ENCODE measurements at regions of chr1 and their contacts with region 1.

Region 1: GRCh38 chr1:204941421-204942338 is 71.0 kb downstream of the NFASC start:
- DNase-seq: no peak
- H3K4me3 ChIP-seq: no peak overlapping the region
- H3K27ac ChIP-seq: peak overlapping the region; percentile 28 to 64 (median 57)
- H3K4me1 ChIP-seq: peaks cover 4 to 31% (median 5%) of the 10 kb centered on the region in 4 donors
- H3K27me3 ChIP-seq: no peaks in the 10 kb centered on the region
- CTCF ChIP-seq: peak; percentile 92 to 95 (median 93)
- EP300 ChIP-seq: no peak
- POLR2A ChIP-seq: no peak

Region 2: DNA sequence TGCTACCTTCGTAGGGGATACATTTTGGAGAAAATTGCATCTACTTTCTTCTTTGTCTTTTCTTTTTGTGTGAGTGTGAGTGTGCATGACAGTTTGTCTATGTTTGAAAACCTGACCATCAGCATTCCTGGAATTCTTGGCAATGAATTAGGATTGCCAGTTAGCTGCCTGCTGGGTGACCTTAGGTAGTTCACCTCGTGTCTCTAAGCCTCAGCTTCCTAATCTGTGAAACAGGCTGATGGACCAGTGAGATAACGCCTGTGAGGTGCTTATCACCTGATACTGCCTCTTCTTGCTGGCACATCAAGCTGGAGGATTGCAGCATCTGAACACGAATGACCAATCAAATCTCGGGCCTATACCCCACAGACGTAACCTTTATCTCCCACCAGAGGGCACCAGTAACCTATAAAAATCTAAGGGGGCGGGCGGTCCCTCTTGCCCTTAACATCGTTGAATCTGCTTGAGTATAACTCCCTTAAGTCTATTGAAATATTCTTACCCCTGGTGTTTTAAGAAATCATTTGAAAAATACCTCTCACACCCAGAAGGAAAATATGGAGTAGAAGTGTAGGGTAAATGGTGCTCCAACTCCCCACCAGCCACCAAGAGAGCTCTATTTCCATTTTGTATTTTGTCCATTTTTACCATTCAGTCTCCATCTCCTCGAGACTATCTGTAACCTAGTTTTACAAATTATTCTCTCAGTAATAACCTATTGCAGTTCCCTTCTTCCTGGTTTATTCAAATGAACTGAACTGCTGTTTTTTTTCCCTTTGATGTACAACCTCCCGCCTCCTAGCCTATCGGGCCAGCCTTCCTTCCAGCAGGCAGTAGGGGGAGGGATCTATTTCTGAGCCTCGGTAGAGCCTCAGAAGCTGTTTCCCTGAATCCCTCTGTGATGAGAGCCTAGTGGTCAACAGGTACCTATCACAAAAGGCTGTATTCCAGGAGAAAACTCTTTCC is 375.8 kb before region 1 on chr1:
- intact Hi-C with region 1: loop called (anchors 5 kb)
- DNase-seq: no peak
- H3K4me3 ChIP-seq: no peak overlapping the region
- H3K27ac ChIP-seq: no peak overlapping the region
- H3K4me1 ChIP-seq: peaks cover 0 to 12% (median 8%) of the 10 kb centered on the region in 4 donors
- H3K27me3 ChIP-seq: no peaks in the 10 kb centered on the region
- CTCF ChIP-seq: peak; percentile 70 to 83 (median 71)
- EP300 ChIP-seq: no peak
- POLR2A ChIP-seq: no peak

Region 3: DNA sequence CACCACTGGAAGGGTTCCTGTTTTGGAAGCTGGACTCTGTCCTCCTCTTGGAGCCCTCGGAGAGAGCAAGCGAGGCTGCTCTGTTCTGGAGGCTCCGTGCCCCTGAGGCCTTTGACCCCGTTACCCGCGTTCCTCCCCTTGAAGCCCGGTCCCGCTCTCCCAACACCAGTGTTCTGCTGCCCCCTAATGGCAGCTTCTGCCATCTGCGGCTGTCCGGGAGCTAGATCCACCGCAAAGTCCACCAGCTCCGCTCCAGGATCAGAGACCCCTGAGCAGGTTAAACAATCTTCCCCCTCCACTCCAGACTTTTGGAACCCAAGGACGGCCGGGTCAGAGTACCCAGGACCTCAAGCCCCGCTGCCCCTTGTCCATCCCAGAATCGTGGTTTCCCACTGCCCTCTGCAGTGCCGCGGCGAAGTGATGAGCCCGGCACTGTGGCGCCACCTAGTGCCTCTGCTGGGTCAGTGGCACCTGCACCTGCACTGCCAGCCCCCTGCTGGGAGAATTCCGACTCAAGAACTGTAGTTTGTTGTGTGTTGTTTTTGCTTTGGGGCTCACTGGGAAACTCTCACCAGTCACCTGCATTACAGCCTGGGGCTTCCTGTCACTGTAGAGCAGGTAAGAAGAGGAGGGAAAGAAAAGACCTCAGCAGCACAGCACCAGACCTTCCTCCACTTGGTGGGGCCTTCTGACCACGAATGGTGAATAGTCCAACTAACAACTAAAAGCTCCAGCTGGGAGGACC is 134.6 kb before region 1 on chr1:
- intact Hi-C with region 1: loop called (anchors 1 kb)
- DNase-seq: peak; percentile 95
- H3K4me3 ChIP-seq: peak overlapping the region; percentile 50 to 66 (median 52)
- H3K27ac ChIP-seq: no peak overlapping the region
- H3K4me1 ChIP-seq: peaks cover 6 to 21% (median 14%) of the 10 kb centered on the region in 4 donors
- H3K27me3 ChIP-seq: no peaks in the 10 kb centered on the region
- CTCF ChIP-seq: peak; percentile 87 to 98 (median 96)
- EP300 ChIP-seq: no peak
- POLR2A ChIP-seq: no peak

Region 4: DNA sequence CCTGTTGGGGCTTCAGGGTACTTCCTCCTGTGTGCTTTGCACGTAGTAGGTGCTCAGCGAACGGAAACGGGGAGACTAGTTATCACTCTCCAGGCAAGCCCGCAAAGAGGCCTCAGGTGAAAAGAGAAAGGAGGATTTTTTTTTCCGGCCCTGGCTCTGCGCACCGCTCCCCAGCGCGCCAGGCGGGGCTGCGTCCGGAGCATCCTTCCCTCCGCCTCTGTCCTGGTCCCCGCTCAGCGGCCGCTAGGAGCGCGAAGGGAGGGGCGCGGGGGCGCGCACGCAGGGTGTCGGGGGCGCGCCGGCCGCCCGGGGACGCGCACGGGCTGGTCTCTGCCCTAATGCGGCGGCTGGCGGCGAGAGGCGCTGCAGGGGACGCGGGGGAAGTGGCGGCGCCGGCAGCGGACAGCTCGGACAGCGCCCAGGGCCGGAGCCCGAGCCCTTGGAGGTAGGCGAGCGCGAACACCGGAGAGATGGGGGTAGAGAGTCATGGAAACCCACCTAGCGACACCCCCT is 113.3 kb before region 1 on chr1:
- intact Hi-C with region 1: loop called (anchors 5 kb)
- DNase-seq: no peak
- H3K4me3 ChIP-seq: peak overlapping the region; percentile 66 to 71 (median 69)
- H3K27ac ChIP-seq: peak overlapping the region; percentile 78 to 90 (median 84)
- H3K4me1 ChIP-seq: peaks cover 12 to 67% (median 52%) of the 10 kb centered on the region in 4 donors
- H3K27me3 ChIP-seq: no peaks in the 10 kb centered on the region
- CTCF ChIP-seq: peak in 2 of 3 experiments; percentile 40 to 41
- EP300 ChIP-seq: no peak
- POLR2A ChIP-seq: peak; percentile 17

Region 5: DNA sequence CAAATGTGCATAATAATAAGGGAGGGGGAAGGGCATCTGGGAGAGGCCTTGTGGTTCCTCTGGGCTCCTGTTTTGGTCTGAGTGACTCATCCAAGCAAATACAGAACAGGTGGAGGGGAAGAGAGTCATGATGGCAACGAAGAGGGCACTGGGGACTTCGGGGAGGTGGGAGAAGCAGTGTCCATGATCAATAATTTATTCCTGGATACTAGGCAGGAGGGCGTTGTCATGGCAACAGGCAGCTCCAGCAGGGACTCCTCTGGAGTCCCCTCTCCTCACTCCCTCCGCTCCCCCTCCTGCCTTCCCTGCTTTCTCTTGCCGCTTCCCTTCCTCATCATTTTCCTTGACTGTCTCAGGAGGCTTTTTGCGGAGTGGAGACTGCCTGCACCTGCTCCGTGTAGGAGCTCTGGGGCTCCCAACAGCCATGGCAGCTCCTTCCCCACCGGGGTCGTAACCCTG is 83.3 kb before region 1 on chr1:
- intact Hi-C with region 1: no loop called
- DNase-seq: no peak
- H3K4me3 ChIP-seq: no peak overlapping the region
- H3K27ac ChIP-seq: peak overlapping the region in 1 of 4 donors; percentile 1
- H3K4me1 ChIP-seq: peaks cover 0 to 55% (median 18%) of the 10 kb centered on the region in 4 donors
- H3K27me3 ChIP-seq: no peaks in the 10 kb centered on the region
- CTCF ChIP-seq: no peak
- EP300 ChIP-seq: no peak
- POLR2A ChIP-seq: no peak

Measured in esophagus muscularis mucosa (tissue), 4 donors.